ENCODE measurements at regions of chr17 and their contacts with region 1.

Region 1: GRCh38 chr17:15999439-16000350 is at the starts of genes TTC19 and ZSWIM7:
- DNase-seq: peak; percentile 91 to 99
- H3K4me3 ChIP-seq: peak within 1 kb of the TSS; percentile 63 to 92 (median 86)
- H3K27ac ChIP-seq: peak within 1 kb of the TSS; percentile 89
- H3K4me1 ChIP-seq: peaks cover 0 to 6% (median 2%) of the 10 kb centered on the region in 4 experiments; a peak in 3 of 7 replicates
- H3K27me3 ChIP-seq: no peaks in the 10 kb centered on the region
- CTCF ChIP-seq: no peak
- EP300 ChIP-seq: 0 out of 3 replicates have a peak, but pooled peaks of 1 of the 2 experiments have one; percentile 9
- POLR2A ChIP-seq: peak; percentile 95 to 96
- RAD21 ChIP-seq: 0 out of 4 replicates have a peak, but pooled peaks of 1 of the 2 experiments have one; percentile 0
- total RNA-seq, gene TTC19: 50.7 and 55.0 TPM in 2 replicates
- total RNA-seq, gene ZSWIM7: 39.3 and 39.4 TPM in 2 replicates

Region 2: GRCh38 chr17:15886804-15887203 is 112.9 kb before region 1 on chr17:
- CTCF ChIA-PET with region 1: no interaction called
- POLR2A ChIA-PET with region 1: no interaction called
- DNase-seq: no peak
- H3K4me3 ChIP-seq: no peak overlapping the region
- H3K27ac ChIP-seq: no peak overlapping the region
- H3K4me1 ChIP-seq: no peaks in the 10 kb centered on the region
- H3K27me3 ChIP-seq: no peaks in the 10 kb centered on the region
- CTCF ChIP-seq: no peak
- EP300 ChIP-seq: no peak
- POLR2A ChIP-seq: no peak
- RAD21 ChIP-seq: no peak

Region 3: GRCh38 chr17:15944759-15945529 is 54.8 kb before region 1 on chr17 and contains the start of gene ADORA2B:
- CTCF ChIA-PET with region 1: interaction called, 38 read pairs
- POLR2A ChIA-PET with region 1: interaction called, 41 read pairs
- DNase-seq: peak in 1 of 2 experiments; percentile 86
- H3K4me3 ChIP-seq: peak within 1 kb of the TSS; percentile 35 to 66 (median 62)
- H3K27ac ChIP-seq: no peak within 1 kb of the TSS
- H3K4me1 ChIP-seq: peaks cover 5 to 17% (median 5%) of the 10 kb centered on the region in 4 experiments; a peak in 6 of 7 replicates
- H3K27me3 ChIP-seq: peaks cover 10 to 41% (median 35%) of the 10 kb centered on the region in 4 experiments
- CTCF ChIP-seq: peak; percentile 57 to 70 (median 67)
- EP300 ChIP-seq: no peak
- POLR2A ChIP-seq: peak in 1 of 2 experiments; percentile 35; a peak in 1 of 3 replicates
- RAD21 ChIP-seq: peak; percentile 58 to 72
- total RNA-seq, gene ADORA2B: 2.6 and 3.3 TPM in 2 replicates

Region 4: DNA sequence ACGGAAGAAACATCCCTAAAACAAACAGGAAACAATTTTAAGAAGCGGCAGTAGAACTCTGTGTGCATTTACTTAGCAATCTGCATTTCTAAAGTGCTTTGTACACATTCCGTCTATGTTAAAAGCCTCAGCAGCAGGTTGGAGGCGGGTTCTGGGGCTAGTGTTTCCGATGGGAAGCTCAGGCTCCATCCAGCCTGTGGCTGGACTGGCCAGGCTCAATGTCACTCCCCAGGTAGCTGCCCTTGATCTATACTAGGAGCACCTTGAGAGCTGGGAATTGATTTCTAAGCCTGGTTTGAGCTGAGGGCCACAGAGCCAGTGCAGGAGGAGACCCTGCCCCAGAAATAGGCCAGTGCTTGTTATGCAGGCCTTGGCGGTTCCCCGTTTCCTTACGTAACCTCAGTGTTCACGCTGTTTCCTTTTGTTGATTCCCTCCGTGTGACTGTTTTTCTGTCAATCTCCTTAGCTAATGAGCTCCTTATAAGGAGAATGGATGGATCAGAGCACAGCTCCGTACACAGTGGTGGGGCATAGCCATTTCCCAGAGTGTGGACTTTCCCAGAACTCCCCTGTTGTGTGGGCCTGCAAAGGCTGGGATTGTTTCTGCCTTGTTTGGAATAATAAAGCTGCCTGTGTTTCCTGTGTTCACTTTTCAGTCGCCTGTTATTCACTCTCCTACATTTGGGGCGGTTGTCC is 33.4 kb before region 1 on chr17:
- CTCF ChIA-PET with region 1: interaction called, 5 read pairs
- POLR2A ChIA-PET with region 1: interaction called, 21 read pairs
- DNase-seq: peak in 1 of 2 experiments; percentile 72
- H3K4me3 ChIP-seq: peak overlapping the region; percentile 0 to 51 (median 20); a peak in 6 of 8 replicates
- H3K27ac ChIP-seq: peak overlapping the region; percentile 89; the same call in 1 of the 2 replicates
- H3K4me1 ChIP-seq: peaks cover 12 to 34% (median 23%) of the 10 kb centered on the region in 4 experiments
- H3K27me3 ChIP-seq: 0 out of 7 replicates have a peak, but pooled peaks cover 0 to 2% (median 0%) of the 10 kb centered on the region in 4 experiments
- CTCF ChIP-seq: no peak
- EP300 ChIP-seq: peak in 1 of 2 experiments; percentile 67; a peak in 1 of 3 replicates
- POLR2A ChIP-seq: peak in 1 of 2 experiments; percentile 45; a peak in 1 of 3 replicates
- RAD21 ChIP-seq: 0 out of 4 replicates have a peak, but pooled peaks have one; percentile 2 to 8

Region 5: DNA sequence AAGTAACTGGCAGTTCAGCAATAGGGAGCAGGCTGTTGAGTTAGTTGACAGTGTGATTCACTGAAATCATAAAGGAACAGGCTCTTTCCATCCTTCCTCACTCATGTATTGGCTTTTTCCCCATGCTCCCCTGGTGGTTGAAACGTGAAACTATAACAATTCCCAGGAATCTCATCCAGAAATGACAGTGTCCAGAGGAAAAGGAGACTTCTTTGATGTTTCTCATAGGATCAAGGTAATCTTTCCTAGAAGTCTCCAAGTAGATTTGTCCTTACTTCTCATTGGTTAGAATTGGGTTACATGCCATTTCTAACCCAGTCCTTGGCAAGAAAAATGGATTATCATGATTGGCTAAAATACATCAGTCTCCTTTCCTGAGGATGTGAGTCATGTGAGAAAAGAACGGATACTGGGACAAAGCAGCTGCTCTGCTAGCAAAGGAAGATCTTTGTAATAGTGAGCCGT is 14.3 kb after region 1 on chr17:
- CTCF ChIA-PET with region 1: interaction called, 3 read pairs
- POLR2A ChIA-PET with region 1: interaction called, 16 read pairs
- DNase-seq: no peak
- H3K4me3 ChIP-seq: no peak overlapping the region
- H3K27ac ChIP-seq: no peak overlapping the region
- H3K4me1 ChIP-seq: no peaks in the 10 kb centered on the region; a peak in 1 of 7 replicates
- H3K27me3 ChIP-seq: no peaks in the 10 kb centered on the region
- CTCF ChIP-seq: peak in 2 of 3 experiments; percentile 21 to 56; a peak in 2 of 4 replicates
- EP300 ChIP-seq: no peak
- POLR2A ChIP-seq: no peak
- RAD21 ChIP-seq: peak in 1 of 2 experiments; percentile 20; a peak in 1 of 4 replicates

Region 6: DNA sequence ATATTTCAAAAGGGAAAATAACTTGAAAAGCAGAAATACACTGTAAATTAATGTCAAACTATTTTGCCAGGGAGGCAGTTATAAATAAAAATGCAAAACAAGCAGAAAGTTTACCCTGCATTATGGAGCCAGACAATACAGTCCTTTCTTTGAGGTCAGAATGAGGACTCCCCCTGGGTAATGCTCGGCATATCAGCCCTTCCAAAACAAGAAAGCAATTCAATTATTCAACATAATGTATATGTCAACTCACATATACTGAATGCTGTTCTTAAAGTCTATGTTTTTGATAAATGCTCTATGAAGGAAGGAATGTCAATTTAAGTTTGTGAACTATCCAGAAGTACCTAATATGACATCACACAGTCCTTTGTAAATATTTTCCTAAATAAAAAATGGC is 72.3 kb after region 1 on chr17:
- CTCF ChIA-PET with region 1: no interaction called
- POLR2A ChIA-PET with region 1: no interaction called
- DNase-seq: no peak
- H3K4me3 ChIP-seq: no peak overlapping the region
- H3K27ac ChIP-seq: no peak overlapping the region
- H3K4me1 ChIP-seq: no peaks in the 10 kb centered on the region
- H3K27me3 ChIP-seq: no peaks in the 10 kb centered on the region
- CTCF ChIP-seq: no peak
- EP300 ChIP-seq: no peak
- POLR2A ChIP-seq: no peak
- RAD21 ChIP-seq: no peak

Region 7: GRCh38 chr17:16129441-16130205 is 129.9 kb after region 1 on chr17:
- CTCF ChIA-PET with region 1: no interaction called
- POLR2A ChIA-PET with region 1: no interaction called
- DNase-seq: no peak
- H3K4me3 ChIP-seq: no peak overlapping the region
- H3K27ac ChIP-seq: no peak overlapping the region
- H3K4me1 ChIP-seq: no peaks in the 10 kb centered on the region
- H3K27me3 ChIP-seq: no peaks in the 10 kb centered on the region
- CTCF ChIP-seq: no peak
- EP300 ChIP-seq: no peak
- POLR2A ChIP-seq: no peak
- RAD21 ChIP-seq: no peak

Region 8: GRCh38 chr17:16215273-16215964 is 215.7 kb after region 1 on chr17 and contains the start of gene NCOR1:
- CTCF ChIA-PET with region 1: no interaction called
- POLR2A ChIA-PET with region 1: interaction called, 12 read pairs
- DNase-seq: peak; percentile 78 to 91
- H3K4me3 ChIP-seq: peak within 1 kb of the TSS; percentile 80 to 92 (median 90)
- H3K27ac ChIP-seq: peak within 1 kb of the TSS; percentile 95
- H3K4me1 ChIP-seq: peaks cover 0 to 6% (median 2%) of the 10 kb centered on the region in 4 experiments; a peak in 5 of 7 replicates
- H3K27me3 ChIP-seq: no peaks in the 10 kb centered on the region
- CTCF ChIP-seq: peak in 2 of 3 experiments; percentile 9 to 21; a peak in 2 of 4 replicates
- EP300 ChIP-seq: peak in 1 of 2 experiments; percentile 72; a peak in 1 of 3 replicates
- POLR2A ChIP-seq: peak; percentile 88 to 94
- RAD21 ChIP-seq: peak; percentile 14 to 40; a peak in 2 of 4 replicates
- total RNA-seq, gene NCOR1: 141 and 142 TPM in 2 replicates